ENCODE measurements at regions of chr17 and their contacts with region 1.

Region 1: GRCh38 chr17:17496189-17497064 is at the start of gene RASD1:
- DNase-seq: peak; percentile 94 to 95 (median 94)
- ATAC-seq: peak; percentile 68 to 91 (median 86)
- H3K4me3 ChIP-seq: peak within 1 kb of the TSS; percentile 55 to 71 (median 64)
- H3K27ac ChIP-seq: peak within 1 kb of the TSS; percentile 82 to 91 (median 86)
- H3K4me1 ChIP-seq: peaks cover 0 to 20% (median 0%) of the 10 kb centered on the region in 4 donors
- H3K27me3 ChIP-seq: no peaks in the 10 kb centered on the region
- CTCF ChIP-seq: peak; percentile 97 to 99 (median 98)
- POLR2A ChIP-seq: peak; percentile 100
- total RNA-seq, gene RASD1: 1.0 to 230 (median 101) TPM

Region 2: GRCh38 chr17:17568749-17569195 is 72.3 kb after region 1 on chr17:
- intact Hi-C with region 1: loop called in 1 of 2 experiments (anchors 5 kb)
- DNase-seq: peak; percentile 92 to 95 (median 94)
- ATAC-seq: peak; percentile 55 to 72 (median 66)
- H3K4me3 ChIP-seq: no peak overlapping the region
- H3K27ac ChIP-seq: peak overlapping the region; percentile 67 to 94 (median 81)
- H3K4me1 ChIP-seq: peaks cover 0 to 91% (median 46%) of the 10 kb centered on the region in 4 donors
- H3K27me3 ChIP-seq: no peaks in the 10 kb centered on the region
- CTCF ChIP-seq: peak; percentile 77 to 93 (median 90)
- POLR2A ChIP-seq: peak; percentile 33

Region 3: GRCh38 chr17:17636272-17636885 is 140.0 kb after region 1 on chr17:
- intact Hi-C with region 1: loop called in 1 of 2 experiments (anchors 10 kb)
- DNase-seq: no peak
- ATAC-seq: no peak
- H3K4me3 ChIP-seq: no peak overlapping the region
- H3K27ac ChIP-seq: no peak overlapping the region
- H3K4me1 ChIP-seq: no peaks in the 10 kb centered on the region
- H3K27me3 ChIP-seq: no peaks in the 10 kb centered on the region
- CTCF ChIP-seq: no peak
- POLR2A ChIP-seq: no peak